ENCODE measurements at regions of chr2 and their contacts with region 1.

Region 1: DNA sequence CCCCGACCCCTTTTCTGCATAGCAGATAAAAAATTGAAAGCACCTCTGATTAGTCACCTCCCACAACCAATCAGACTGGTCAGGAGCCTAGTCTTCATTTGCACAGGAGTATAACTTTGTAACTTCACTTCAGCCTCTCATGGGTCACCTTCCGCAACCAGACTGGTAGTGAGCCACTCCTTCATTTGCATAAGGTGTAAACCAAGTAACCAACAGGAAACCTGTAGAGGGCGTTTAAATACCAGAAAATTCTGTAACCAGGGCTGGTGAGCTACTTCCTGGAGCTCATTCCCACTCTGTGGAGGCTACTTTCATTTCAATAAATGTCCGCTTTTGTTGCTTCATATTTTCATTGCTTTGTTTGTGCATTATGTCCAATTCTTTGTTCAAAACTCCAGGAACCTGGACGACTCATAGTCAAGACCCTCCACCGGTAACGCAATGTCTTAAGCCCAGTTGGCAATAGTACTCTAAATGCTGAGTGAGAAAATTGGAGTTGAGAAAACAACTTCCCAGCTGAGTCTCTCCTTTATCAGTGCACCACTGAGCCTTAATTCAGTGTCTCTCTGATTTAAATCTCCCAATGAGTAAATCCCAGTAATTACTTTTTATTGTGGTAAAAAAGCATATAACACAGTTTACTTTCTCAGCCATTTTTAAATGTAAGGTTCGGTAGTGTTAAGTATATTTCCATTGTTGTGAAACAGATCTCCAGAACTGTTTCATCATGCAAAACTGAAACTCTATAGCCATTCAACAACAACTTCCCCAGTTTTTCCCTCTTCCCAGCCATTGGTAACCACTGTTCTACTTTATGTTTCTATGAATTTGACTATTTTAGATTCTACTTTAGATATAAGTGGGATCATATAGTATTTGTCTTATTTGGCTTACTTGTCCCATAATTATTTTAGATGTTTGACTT is 392.7 kb upstream of the SLC8A1 start:
- DNase-seq: no peak
- H3K4me3 ChIP-seq: no peak overlapping the region
- H3K27ac ChIP-seq: no peak overlapping the region
- H3K4me1 ChIP-seq: no peaks in the 10 kb centered on the region
- H3K27me3 ChIP-seq: no peaks in the 10 kb centered on the region

Region 2: DNA sequence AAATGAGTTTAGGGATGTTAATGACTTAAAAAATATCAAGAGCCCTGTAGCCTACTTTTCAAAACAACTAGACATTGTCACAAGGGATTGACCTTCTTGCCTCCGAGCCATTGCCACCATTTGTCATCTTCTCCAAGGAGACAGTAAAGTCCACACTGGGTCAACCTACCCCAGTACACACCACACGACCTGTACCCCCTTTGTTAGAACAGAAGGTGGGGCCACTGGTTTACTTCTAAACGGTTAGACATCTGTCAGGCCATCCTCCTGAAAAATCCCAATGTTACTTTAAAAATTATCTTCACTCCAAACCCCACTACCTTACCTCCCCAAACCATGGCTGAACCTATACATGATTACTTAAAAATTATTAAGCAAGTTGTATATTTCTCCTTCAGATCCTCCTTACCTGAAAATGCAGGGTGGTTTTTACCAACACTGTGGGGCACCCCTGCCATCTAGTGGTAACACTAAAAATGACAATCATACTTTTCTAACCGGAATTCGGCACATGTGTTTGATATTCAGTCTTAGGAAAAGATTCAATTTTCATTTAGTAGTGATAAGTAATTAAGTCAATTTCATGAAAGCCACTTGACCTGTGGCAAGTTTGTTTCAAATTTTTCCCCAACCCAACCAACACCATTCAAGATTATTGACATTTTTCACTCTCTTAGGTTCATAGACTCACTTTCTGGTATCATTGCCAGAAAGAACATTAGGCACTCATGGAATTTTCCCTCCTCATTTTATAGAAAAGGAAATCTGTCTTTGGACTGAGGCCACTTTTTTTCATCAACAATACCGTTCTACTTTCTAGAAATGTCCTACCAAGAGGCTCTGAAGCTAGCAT is 937.9 kb after region 1 on chr2:
- in situ Hi-C with region 1: loop called (anchors 25 kb)
- DNase-seq: peak; percentile 52
- H3K4me3 ChIP-seq: no peak overlapping the region
- H3K27ac ChIP-seq: no peak overlapping the region
- H3K4me1 ChIP-seq: no peaks in the 10 kb centered on the region
- H3K27me3 ChIP-seq: 0 out of 2 replicates have a peak, but pooled peaks cover 7% of the 10 kb centered on the region